ENCODE measurements at regions of chr6 and their contacts with region 1.

Region 1: DNA sequence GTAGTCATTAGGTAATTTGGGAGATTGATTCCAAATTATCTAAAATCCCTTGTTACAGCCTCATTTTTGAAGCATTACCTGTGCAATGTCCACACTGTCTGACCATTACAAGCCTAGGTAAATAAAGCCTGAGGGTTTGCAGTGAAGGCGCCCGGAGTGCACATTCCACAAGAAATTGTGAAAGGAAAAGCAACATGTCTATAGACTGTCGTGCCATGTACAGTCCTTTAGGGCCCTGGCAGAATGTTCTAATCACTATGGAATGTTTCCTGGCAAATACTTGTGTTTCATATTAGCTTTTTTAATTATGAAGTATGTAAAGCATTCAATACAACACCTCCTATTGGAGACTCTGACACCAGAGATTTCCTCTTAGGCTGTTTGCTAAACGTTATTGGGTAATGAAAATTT is 28.9 kb downstream of the PREP start:
- DNase-seq: no peak
- ATAC-seq: no peak
- H3K4me3 ChIP-seq: no peak overlapping the region
- H3K27ac ChIP-seq: no peak overlapping the region
- H3K4me1 ChIP-seq: peaks cover 0 to 4% (median 0%) of the 10 kb centered on the region in 9 donors
- H3K27me3 ChIP-seq: no peaks in the 10 kb centered on the region
- CTCF ChIP-seq: no peak

Region 2: GRCh38 chr6:105112577-105112976 is 261.4 kb before region 1 on chr6:
- intact Hi-C with region 1: loop called in 1 of 10 experiments (anchors 10 kb)
- DNase-seq: no peak
- ATAC-seq: peak in 3 of 8 donors; percentile 33 to 43 (median 39)
- H3K4me3 ChIP-seq: no peak overlapping the region
- H3K27ac ChIP-seq: peak overlapping the region in 1 of 10 donors; percentile 41
- H3K4me1 ChIP-seq: peaks cover 0 to 5% (median 0%) of the 10 kb centered on the region in 9 donors
- H3K27me3 ChIP-seq: no peaks in the 10 kb centered on the region
- CTCF ChIP-seq: no peak